GM10248 (cell line): ENCODE measurements at regions of chr11 and their contacts with region 1.

Region 1: GRCh38 chr11:65540297-65541092 is 15.6 kb downstream of the SCYL1 start:
- DNase-seq: peak; percentile 98
- CTCF ChIP-seq: peak; percentile 81

Region 2: GRCh38 chr11:65524741-65525545 is 15.6 kb before region 1 on chr11 and contains the start of gene SCYL1:
- CTCF ChIA-PET with region 1: interaction called, 77 read pairs
- POLR2A ChIA-PET with region 1: interaction called, 6 read pairs
- DNase-seq: peak; percentile 96
- CTCF ChIP-seq: no peak

Region 3: GRCh38 chr11:65558002-65558931 is 17.8 kb after region 1 on chr11 and contains the start of gene LTBP3:
- CTCF ChIA-PET with region 1: interaction called, 86 read pairs
- POLR2A ChIA-PET with region 1: interaction called, 7 read pairs
- DNase-seq: peak; percentile 72
- CTCF ChIP-seq: no peak

Region 4: DNA sequence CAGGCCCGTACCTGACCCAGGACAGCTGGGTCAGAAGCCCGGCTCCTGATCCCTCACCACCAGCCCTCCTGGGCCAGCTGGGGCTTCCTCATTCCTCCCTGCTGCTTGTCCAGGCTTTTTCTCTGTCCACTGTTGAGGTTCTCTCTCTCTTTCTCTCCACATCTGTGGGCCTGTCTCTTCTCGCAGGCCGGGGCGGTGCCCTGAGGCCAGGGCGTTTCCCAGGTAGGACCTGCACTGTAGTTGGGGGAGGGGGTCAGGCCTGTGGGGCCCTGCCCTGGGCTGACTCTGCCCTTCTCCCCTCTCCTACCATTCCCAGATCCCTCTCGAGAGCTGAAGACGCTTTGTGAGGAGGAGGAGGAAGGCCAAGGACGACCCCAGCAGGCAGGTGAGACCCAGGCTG is 40.2 kb after region 1 on chr11:
- CTCF ChIA-PET with region 1: interaction called, 54 read pairs
- POLR2A ChIA-PET with region 1: no interaction called
- DNase-seq: no peak
- CTCF ChIP-seq: no peak

Region 5: DNA sequence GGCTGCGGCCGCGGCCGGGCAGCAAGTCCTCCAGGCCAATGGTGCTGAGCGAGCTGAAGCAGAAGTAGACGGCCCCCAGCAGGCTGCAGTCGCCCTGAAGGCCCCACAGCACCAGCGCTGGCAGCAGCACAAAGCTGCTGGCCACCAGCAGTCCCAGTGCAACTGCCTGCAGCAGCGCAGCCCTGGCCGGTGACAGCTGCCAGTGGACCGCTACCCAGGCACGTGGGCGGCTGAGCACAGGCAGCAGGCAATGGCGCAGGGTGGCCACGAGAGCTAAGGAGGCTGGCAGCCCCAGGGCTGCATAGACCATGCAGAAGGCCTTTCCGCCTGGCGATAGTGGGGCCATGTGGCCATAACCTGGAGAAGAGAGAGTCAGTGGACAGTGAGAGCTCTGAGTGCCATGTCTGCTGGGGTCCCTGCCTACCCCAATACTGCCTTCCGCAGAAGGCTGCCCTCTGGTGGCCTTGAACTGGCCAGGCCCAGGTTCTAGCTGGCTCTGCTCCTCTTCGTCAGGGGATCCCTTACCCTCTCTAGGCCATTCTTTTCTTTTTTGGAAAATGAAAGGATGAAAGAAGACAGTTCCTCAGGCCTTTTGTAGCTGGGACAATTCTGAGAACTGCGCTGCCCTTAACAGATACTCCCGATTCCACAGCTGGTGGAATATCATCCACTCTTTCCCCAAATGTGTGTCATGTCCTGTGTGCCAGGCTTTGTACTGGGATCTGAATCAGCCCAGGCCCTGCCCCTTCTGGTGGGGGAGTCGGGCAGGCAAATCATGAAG is 53.2 kb after region 1 on chr11:
- CTCF ChIA-PET with region 1: interaction called, 54 read pairs
- POLR2A ChIA-PET with region 1: interaction called, 3 read pairs
- DNase-seq: peak; percentile 70
- CTCF ChIP-seq: peak; percentile 76